ENCODE measurements at regions of chr7 and their contacts with region 1.

Region 1: DNA sequence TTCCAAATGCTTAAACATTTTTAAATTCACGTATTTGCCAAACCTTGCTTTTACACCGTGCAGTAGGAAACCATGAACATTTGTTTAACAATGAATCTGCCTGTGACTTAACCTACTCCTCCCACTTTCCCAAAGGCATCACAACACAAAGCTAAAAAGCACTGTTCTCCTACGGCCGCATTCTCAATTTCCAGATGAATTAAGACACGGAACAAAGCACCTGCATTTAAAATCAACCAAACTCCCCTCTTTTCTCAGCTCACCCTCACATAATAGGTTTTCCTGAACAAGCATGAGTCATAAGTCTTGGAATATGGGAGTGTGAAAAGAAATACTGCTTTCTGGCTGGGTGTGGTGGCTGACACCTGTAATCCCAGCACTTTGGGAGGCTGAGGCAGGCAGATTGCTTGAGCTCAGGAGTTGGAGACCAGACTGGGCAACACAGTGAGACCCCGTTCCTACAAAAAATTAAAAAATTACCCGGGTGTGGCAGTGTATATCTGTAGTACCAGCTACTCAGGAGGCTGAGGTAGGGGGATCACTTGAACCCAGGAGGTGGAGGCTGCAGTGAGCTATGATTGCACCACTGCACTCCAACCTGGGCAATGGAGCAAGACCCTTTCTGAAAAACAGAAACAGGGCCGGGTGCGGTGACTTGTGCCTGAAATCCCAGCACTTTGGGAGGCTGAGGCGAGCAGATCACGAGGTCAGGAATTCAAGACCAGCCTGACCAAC is 51.7 kb upstream of the CYTH3 start:
- DNase-seq: no peak
- H3K4me3 ChIP-seq: no peak overlapping the region
- H3K27ac ChIP-seq: no peak overlapping the region
- H3K4me1 ChIP-seq: no peaks in the 10 kb centered on the region
- H3K27me3 ChIP-seq: no peaks in the 10 kb centered on the region
- CTCF ChIP-seq: no peak

Region 2: DNA sequence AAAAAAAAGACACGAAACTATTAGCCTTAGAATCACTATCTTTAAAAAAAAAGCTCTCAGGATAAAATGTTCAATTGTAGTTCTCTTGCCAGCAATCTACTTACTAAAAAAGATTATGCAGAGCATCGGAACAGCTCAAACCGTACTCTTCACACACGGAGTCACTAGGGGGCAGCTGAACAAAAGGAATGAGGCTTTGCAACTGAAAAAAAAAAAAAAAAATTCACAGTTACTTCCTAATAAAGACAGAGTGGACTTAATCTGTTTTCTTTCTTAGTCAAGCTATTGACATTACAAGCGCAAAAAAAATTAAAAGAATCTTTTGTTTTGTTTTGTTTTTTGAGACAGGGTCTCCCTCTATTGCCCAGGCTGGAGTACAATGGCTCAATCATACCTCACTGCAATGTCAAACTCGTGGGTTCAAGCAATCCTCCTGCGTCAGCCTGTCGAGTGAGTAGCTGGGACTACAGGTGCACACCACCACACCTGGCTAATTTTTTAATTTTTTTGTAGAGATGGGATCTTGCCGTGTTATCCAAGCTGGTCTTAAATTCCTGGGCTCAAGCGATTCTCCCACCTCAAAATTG is 326.8 kb before region 1 on chr7:
- CTCF ChIA-PET with region 1: no interaction called
- POLR2A ChIA-PET with region 1: no interaction called
- intact Hi-C with region 1: loop called (anchors 1 kb)
- DNase-seq: peak; percentile 54 to 70
- H3K4me3 ChIP-seq: no peak overlapping the region
- H3K27ac ChIP-seq: no peak overlapping the region
- H3K4me1 ChIP-seq: peaks cover 16% of the 10 kb centered on the region
- H3K27me3 ChIP-seq: no peaks in the 10 kb centered on the region
- CTCF ChIP-seq: peak; percentile 78

Region 3: DNA sequence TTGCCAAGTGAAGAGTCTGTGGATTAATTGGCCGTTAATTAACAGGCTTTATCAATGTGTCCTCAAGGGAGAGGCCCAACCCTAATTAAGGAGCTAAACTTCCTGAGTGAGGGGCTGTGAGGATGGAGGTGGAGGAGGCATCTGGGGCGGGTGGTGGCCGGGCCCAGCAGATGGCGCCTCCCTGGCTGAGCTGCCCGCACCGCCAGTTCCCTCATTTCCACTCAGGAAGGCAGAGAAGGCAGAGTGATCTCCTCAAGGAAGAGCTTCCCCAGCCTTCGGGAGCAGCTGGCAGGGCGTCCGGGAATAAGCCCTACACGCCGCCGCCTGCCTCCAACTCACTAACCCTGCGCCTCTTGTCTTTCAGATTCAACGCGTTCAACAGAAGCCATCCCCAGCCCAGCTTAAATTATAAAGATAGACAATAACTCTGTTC is 163.9 kb before region 1 on chr7:
- CTCF ChIA-PET with region 1: no interaction called
- POLR2A ChIA-PET with region 1: no interaction called
- intact Hi-C with region 1: loop called (anchors 1 kb)
- DNase-seq: peak in 1 of 2 experiments; percentile 38
- H3K4me3 ChIP-seq: no peak overlapping the region
- H3K27ac ChIP-seq: no peak overlapping the region
- H3K4me1 ChIP-seq: no peaks in the 10 kb centered on the region
- H3K27me3 ChIP-seq: no peaks in the 10 kb centered on the region
- CTCF ChIP-seq: peak; percentile 55

Region 4: DNA sequence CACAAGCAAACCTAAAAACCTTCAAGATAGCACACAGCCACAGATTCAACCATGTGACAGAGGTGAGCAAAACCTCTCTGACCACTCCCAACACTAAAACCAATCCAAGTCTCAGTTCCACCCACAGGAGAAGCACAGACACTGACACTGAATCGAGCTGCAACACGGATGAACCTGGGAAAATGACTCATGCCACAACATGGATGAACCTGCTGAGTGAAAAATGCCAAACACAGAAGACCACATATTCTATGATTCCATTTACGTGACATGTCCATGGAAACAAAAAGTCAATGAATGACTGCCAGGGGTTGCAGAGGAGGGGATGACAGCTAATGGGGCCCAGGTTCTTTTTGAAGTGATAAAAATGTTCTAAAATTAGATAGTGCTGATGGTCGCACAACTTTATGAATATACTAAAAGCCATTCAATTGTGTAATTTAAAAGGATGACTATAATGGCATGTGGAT is 73.7 kb before region 1 on chr7:
- CTCF ChIA-PET with region 1: no interaction called
- POLR2A ChIA-PET with region 1: no interaction called
- intact Hi-C with region 1: loop called (anchors 5 kb)
- DNase-seq: no peak
- H3K4me3 ChIP-seq: no peak overlapping the region
- H3K27ac ChIP-seq: no peak overlapping the region
- H3K4me1 ChIP-seq: no peaks in the 10 kb centered on the region
- H3K27me3 ChIP-seq: no peaks in the 10 kb centered on the region
- CTCF ChIP-seq: no peak

Region 5: DNA sequence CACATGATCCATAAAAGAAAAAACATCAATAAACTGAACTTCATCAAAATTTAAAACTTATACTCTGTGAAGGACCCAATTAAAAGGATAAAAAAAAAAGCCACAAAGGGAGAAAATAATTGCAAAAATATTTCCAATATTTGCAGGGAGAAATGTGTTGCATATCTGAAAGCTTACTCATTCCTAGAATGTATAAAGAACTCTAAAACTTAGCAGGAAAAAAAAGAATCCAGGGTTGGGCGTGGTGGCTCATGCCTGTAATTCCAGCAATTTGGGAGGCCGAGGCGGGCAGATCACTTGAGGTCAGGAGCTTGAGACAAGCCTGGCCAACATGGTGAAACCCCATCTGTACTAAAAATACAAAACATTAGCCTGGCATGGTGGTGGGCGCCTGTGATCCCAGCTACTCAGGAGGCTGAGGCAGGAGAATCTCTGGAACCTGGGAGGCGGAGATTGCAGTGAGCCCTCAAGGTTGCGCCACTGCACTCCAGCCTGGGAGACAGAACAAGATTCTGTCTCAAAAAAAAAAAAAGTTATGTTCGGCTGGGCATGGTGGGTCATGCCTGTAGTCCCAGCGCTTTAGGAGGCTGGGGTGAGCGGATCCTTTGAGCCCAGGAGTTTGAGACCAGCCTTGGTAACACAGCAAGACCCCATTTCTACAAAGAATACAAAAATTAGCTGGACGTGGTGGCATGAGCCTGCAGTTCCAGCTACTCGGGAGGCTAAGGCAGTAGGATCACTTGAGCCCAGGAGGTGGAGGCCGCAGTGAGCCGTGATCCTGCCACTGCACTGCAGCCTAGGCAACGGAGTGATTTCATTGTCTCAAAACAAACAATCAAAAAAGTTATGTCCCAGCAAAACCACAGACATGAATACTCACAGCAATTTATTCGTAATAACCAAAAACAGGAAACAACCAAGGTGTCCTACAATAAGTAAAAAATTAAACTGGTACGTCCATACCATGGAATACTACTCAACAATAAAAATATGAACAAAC is 40.4 kb before region 1 on chr7:
- CTCF ChIA-PET with region 1: interaction called, 5 read pairs
- POLR2A ChIA-PET with region 1: interaction called, 4 read pairs
- intact Hi-C with region 1: loop called (anchors 1 kb)
- DNase-seq: peak; percentile 90 to 93
- H3K4me3 ChIP-seq: peak overlapping the region; percentile 48; the same call in 1 of the 2 replicates
- H3K27ac ChIP-seq: peak overlapping the region; percentile 100
- H3K4me1 ChIP-seq: peaks cover 35% of the 10 kb centered on the region
- H3K27me3 ChIP-seq: no peaks in the 10 kb centered on the region
- CTCF ChIP-seq: no peak

Measured in PC-9 (cell line).